HepG2 (cell line): ENCODE measurements at regions of chr1 and their contacts with region 1.

Region 1: DNA sequence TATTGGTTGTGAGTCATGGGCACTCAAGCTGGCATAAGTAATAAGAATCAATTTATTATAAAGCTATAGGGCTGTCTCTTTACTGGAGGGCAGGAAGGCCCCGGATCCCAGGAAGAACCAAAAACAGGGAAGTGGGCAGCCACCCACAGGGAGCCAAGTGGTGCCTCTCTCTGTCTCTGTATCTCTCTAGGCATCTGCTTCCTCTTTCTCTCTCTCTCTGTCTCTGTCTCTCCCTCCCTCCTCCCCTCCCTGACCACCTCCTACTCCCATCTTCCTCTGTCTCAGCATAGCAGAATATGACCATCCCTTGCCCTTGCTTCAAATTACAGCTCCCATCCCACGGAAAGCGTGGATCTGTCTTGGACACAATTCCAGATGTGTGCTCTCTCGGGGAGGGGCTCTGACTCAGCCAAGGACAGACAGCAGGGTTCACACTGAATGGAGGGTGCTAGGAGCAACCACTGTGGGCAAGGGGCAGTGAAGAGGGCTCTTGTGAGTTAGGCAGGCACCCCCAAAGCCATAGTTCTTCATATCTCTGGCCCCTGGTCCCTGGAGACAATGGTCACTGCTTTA is 80.4 kb upstream of the LPGAT1 start:
- DNase-seq: no peak
- ATAC-seq: no peak
- H3K4me3 ChIP-seq: no peak overlapping the region
- H3K27ac ChIP-seq: peak overlapping the region; percentile 20
- H3K4me1 ChIP-seq: peaks cover 39% of the 10 kb centered on the region
- H3K27me3 ChIP-seq: no peaks in the 10 kb centered on the region
- CTCF ChIP-seq: no peak
- EP300 ChIP-seq: no peak
- POLR2A ChIP-seq: no peak
- RAD21 ChIP-seq: no peak

Region 2: DNA sequence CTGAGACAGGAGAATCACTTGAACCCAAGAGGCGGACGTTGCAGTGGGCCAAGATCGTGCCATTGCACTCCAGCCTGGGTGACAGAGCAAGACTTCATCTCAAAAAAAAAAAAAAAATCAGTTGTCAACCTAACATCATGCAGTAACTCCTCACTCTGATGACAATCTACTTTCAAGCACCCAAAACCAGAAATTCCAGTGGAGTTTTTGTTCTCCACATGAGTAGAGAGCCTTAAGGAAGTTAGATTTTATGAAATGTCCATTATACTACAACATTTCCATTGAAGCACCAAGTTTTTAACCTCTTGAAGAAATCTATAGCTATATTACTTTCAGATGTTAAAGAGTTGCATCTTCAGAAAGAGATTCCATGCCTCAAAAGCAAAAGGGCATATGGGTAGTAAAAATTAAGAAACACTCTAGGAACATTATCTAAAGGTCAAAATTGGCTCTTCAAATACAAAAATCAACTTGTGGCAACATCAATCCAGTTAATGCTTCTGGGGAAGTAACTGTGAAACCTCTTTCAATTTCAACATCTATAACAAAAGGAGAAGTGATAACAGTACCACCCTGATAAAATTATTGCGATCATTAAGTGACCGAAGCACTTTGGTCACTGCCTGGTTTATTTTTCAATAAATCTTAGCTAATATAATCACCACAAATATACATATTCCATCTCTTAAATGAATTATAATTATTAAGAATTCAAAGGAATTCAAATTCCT is 88.2 kb before region 1 on chr1:
- CTCF ChIA-PET with region 1: no interaction called
- POLR2A ChIA-PET with region 1: no interaction called
- in situ Hi-C with region 1: no loop called
- intact Hi-C with region 1: no loop called
- DNase-seq: no peak
- ATAC-seq: no peak
- H3K4me3 ChIP-seq: no peak overlapping the region
- H3K27ac ChIP-seq: no peak overlapping the region
- H3K4me1 ChIP-seq: peaks cover 13% of the 10 kb centered on the region
- H3K27me3 ChIP-seq: no peaks in the 10 kb centered on the region
- CTCF ChIP-seq: no peak
- EP300 ChIP-seq: no peak
- POLR2A ChIP-seq: no peak
- RAD21 ChIP-seq: no peak

Region 3: GRCh38 chr1:211874521-211875347 is 36.3 kb before region 1 on chr1:
- CTCF ChIA-PET with region 1: no interaction called
- POLR2A ChIA-PET with region 1: no interaction called
- in situ Hi-C with region 1: no loop called
- intact Hi-C with region 1: no loop called
- DNase-seq: no peak
- ATAC-seq: no peak
- H3K4me3 ChIP-seq: no peak overlapping the region
- H3K27ac ChIP-seq: no peak overlapping the region
- H3K4me1 ChIP-seq: no peaks in the 10 kb centered on the region
- H3K27me3 ChIP-seq: no peaks in the 10 kb centered on the region; a peak in 1 of 5 replicates
- CTCF ChIP-seq: no peak
- EP300 ChIP-seq: no peak
- POLR2A ChIP-seq: no peak
- RAD21 ChIP-seq: no peak

Region 4: DNA sequence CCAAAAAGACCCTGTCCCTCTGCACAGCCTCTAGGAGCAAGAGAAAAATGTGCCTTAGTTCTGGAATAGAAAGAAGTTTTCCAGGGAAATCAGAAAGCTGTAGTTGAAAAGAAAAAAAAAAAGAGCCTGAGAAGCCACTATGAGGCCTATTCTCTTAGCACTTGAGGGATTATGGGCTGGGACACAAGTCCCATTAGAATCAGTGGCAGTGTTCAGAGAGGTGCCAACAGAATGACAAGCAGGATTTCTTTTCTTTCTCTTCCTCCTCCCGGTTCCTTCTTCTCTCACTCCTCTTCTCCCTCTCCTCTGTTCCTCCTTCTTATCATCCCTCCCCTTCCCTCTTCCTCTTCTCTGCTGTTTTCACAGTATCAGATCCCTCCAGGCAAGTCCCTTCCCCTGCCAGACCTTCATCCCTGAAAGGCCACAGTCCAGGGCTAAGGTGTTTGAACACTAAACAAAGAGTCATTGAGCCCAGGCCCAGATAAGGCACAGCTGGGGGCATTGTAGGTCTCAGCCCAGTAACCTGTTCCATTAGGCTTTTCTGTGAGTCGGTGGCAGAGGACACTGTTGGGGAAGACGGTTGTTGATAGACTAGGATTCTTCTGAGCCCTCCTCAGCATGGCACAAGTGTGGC is 15.8 kb before region 1 on chr1:
- CTCF ChIA-PET with region 1: no interaction called
- POLR2A ChIA-PET with region 1: interaction called, 3 read pairs
- in situ Hi-C with region 1: no loop called
- intact Hi-C with region 1: loop called (anchors 2 kb)
- DNase-seq: peak; percentile 85
- ATAC-seq: peak; percentile 98
- H3K4me3 ChIP-seq: peak overlapping the region in 1 of 3 experiments; percentile 13; a peak in 2 of 6 replicates
- H3K27ac ChIP-seq: peak overlapping the region; percentile 55
- H3K4me1 ChIP-seq: peaks cover 75% of the 10 kb centered on the region
- H3K27me3 ChIP-seq: no peaks in the 10 kb centered on the region
- CTCF ChIP-seq: peak; percentile 23; the same call in 1 of the 2 replicates
- EP300 ChIP-seq: peak in 1 of 2 experiments; percentile 75; a peak in 2 of 4 replicates
- POLR2A ChIP-seq: no peak
- RAD21 ChIP-seq: no peak

Region 5: DNA sequence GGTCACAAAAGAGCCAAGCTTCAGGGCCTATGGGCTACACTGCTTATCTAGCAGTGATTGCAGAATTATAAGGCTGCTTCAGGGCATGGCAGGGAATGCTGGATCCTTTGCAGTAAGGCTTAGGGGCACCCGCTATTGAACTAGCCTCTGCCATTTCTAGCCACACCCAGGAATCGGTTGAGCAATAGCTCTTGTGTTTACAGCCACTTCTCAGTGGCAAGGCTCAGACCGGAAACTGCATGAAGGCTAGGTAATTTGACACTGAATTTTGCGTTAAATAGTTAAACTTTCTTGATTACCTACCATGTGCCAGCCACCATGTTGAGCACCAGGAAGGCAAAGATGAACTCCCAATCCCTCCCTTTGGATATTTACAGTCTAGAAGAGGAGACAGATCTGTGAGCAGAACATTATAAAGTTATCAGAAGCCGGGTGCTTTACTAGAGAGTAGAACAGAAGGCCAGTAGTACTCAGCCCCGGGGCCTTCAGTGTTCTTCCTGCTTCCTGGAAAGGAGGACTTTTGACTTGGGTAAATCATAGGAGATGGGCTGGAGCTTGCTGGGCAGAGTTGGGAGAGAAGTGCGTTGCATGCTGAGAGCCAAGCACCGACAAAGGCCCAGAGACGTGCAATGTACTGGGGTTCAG is 18.1 kb after region 1 on chr1:
- CTCF ChIA-PET with region 1: no interaction called
- POLR2A ChIA-PET with region 1: interaction called, 13 read pairs
- in situ Hi-C with region 1: no loop called
- intact Hi-C with region 1: no loop called
- DNase-seq: peak; percentile 84
- ATAC-seq: peak; percentile 91
- H3K4me3 ChIP-seq: peak overlapping the region; percentile 36 to 61 (median 41)
- H3K27ac ChIP-seq: peak overlapping the region; percentile 72
- H3K4me1 ChIP-seq: peaks cover 34% of the 10 kb centered on the region
- H3K27me3 ChIP-seq: no peaks in the 10 kb centered on the region
- CTCF ChIP-seq: no peak
- EP300 ChIP-seq: peak in 1 of 2 experiments; percentile 60; a peak in 1 of 4 replicates
- POLR2A ChIP-seq: 0 out of 4 replicates have a peak, but pooled peaks of 1 of the 2 experiments have one; percentile 29
- RAD21 ChIP-seq: no peak